Activated naive CD4-positive, alpha-beta T cell treated with anti-CD3 and anti-CD28 coated beads, Interleukin-2, amount 10 ng/mL, durations not matched to agents 7 days and 5 days (primary cell): ENCODE measurements at regions of chr5 and their contacts with region 1.

Region 1: DNA sequence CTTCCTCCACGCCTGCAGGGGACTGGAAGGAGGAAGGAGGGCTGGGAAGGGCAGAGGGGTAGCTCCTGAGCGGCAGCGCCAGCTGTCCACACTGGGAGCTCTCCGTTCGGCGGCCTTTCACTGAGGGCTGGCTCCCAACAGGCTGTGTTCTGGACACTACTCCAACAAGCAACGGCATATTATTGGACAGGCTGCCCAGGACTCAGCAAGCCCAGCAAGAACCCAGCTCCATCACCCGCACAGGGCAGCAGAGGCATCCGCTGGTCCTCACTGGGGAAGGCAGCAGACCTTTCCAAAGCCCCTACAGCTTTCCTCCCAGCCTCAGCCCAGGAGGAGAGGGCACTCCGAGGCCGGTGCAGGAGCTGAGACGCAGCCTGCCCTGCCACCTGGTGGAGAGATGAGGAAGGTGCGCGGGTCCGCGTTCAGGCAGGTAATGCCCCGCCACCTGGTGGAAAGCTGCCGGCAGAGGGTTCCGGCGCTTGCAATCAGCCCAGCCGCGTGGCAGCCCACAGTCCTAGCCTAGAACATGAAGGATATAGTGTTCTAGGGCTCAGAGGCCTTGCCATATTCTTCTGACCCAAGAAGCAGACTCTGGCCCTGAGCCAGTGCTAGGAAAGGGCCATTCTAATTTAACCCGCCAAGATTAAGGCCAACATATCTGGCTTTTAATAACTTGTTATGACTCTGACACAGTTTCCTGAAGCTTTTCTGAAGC is 74.4 kb downstream of the NRG2 start:
- DNase-seq: peak; percentile 91
- H3K4me3 Mint-ChIP-seq: no peak overlapping the region
- H3K27ac Mint-ChIP-seq: no peak overlapping the region
- H3K4me1 Mint-ChIP-seq: no peaks in the 10 kb centered on the region
- H3K27me3 Mint-ChIP-seq: peaks cover 51% of the 10 kb centered on the region

Region 2: DNA sequence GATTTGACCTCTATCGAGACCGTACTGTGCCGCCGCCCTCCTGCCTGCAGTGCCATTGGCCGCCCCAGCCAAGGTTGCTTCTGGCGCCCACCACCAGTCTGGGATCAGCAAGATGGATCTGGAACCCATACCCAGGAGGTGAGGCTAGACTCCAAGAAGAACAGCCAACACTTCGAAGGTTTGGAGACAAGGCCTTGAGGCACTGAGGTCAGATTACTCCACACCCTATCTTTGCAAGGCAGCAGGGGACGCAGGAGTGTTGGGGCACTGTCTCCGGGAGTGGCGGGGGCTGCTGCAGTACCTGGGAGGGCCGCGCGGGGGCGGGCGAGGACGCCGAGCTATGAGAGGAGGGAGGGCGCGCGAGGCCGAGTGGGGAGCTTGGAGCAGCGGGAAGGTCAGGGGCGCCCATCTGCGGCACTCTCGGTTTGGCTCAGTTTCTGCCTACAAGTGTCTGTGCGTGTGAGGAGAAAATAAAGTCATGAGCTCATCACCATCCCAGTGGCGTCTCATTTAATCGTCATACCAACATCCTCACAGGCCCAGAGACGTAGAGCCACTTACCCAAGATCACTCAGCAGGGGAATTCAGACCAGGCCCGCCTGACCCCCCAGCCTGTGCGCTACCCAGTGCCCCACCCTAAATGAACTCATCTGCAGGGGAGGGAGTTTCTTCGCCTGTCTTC is 193.6 kb before region 1 on chr5:
- CTCF ChIA-PET with region 1: interaction called, 33 read pairs
- DNase-seq: peak; percentile 83
- H3K4me3 Mint-ChIP-seq: no peak overlapping the region
- H3K27ac Mint-ChIP-seq: no peak overlapping the region
- H3K4me1 Mint-ChIP-seq: peaks cover 7% of the 10 kb centered on the region
- H3K27me3 Mint-ChIP-seq: peaks cover 56% of the 10 kb centered on the region

Region 3: GRCh38 chr5:139787568-139788293 is 181.0 kb before region 1 on chr5:
- CTCF ChIA-PET with region 1: interaction called, 119 read pairs
- DNase-seq: peak; percentile 86
- H3K4me3 Mint-ChIP-seq: peak overlapping the region; percentile 70
- H3K27ac Mint-ChIP-seq: no peak overlapping the region
- H3K4me1 Mint-ChIP-seq: peaks cover 13% of the 10 kb centered on the region
- H3K27me3 Mint-ChIP-seq: peaks cover 91% of the 10 kb centered on the region

Region 4: DNA sequence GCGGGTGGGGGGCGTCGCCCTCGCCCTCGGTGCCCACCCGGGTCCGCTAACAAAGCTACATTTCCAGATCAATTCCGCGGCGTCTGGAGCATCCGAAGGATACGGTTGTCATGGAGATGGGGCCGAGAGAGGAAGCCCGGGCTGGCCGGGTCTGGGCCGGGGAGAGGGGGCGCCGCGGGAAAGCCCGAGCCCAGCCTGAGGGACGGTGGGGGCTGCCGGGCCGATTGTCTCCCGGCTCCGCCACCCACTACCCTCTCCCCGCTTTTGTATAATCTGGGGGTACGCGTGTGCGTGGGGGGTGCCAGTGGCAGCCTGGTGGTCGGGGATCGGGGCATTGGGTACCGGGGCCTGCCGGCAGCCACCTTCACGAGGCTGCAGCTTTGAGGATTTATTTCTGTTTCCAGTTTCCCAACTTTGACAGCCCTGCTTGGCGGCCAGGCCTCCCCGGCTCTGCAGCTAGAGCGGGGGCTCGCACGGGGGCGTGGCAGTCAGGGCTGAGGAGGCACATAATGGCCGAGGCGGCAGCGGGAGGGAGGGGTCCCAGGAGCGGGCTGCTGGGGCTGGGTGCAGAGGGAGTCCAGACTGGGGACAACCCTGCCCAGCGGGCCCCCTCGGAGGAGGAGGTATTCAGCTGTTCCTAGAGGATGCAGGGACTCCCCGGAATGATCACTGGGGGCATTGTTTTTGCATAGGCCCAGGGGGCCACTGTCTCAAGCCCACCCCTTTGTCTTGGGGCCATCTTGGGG is 172.5 kb before region 1 on chr5:
- CTCF ChIA-PET with region 1: interaction called, 26 read pairs
- DNase-seq: no peak
- H3K4me3 Mint-ChIP-seq: no peak overlapping the region
- H3K27ac Mint-ChIP-seq: no peak overlapping the region
- H3K4me1 Mint-ChIP-seq: no peaks in the 10 kb centered on the region
- H3K27me3 Mint-ChIP-seq: peaks cover 96% of the 10 kb centered on the region

Region 5: DNA sequence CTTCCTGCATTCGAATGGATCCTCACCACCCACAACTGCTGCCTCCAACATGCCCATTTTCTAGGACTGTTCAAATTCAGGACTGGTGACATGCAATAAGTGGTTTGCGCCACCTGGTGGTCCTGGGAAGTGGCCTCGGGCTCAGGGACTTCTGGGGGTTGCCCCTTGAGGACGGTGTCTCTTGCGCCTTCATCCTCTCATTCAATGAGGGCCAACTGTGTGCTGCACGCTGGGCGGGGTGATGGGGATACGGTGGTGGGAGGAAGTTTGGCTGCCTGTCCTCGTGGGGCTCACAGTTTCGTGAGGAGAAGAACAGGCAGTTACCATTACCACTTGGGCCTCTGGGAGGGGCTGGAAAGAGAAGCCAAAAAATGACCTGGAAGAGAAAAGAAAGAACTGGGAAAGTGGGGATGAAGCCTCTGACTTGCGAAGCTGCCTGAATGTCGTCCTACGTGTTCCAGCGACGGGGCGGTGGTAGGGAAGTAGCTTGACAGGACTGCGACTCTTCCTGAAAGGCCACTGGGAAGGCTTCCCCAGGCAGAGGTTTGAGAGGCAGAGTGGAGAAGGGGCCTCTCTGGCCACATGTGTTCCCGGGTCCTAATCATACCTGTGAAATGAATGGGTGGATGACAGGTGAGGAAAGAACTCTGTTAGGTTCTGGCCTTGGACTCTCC is 124.1 kb before region 1 on chr5:
- CTCF ChIA-PET with region 1: interaction called, 13 read pairs
- DNase-seq: peak; percentile 80
- H3K4me3 Mint-ChIP-seq: no peak overlapping the region
- H3K27ac Mint-ChIP-seq: no peak overlapping the region
- H3K4me1 Mint-ChIP-seq: peaks cover 6% of the 10 kb centered on the region
- H3K27me3 Mint-ChIP-seq: peaks cover 64% of the 10 kb centered on the region

Region 6: GRCh38 chr5:139949710-139950109 is 19.0 kb before region 1 on chr5:
- CTCF ChIA-PET with region 1: interaction called, 10 read pairs
- DNase-seq: no peak
- H3K4me3 Mint-ChIP-seq: no peak overlapping the region
- H3K27ac Mint-ChIP-seq: no peak overlapping the region
- H3K4me1 Mint-ChIP-seq: no peaks in the 10 kb centered on the region
- H3K27me3 Mint-ChIP-seq: peaks cover 31% of the 10 kb centered on the region

Region 7: DNA sequence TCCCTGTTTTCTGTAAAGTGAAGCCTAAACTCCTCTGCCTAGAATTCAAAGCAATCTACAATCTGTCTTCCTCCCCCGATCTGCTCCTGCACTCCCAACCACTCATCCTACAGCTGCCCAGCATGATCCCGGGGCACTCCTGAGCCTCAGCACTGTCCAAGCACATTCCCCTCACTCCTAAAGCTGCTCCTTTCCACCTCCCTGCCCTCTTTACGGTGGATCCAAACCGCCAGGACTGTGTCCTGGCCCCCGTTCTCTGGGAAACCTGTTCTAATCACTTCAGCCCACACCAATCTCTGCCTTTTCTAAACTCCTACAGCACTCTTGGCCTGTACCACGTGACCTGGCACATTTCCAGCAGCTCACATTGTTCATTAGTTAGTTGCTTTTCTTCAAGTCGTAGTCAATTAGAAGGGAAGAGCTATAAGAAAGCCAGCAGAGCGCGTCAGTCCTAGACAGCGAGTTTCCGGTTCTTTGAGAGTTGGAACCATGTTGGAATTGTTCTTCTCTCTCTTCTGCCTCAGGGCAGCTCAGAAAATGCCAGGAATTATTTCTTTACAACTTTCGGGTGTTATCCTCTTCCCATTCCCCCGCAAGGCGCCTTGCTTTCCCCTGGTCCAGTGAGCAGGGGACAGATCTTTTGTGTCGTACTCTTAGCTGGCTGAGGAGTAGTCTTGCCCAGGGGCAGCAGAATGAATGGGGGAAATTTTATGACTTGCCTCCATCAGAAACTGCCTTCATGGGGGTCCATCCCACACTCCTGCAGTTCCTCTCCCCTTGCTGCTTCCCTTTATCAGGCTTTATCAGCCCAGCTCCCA is 13.7 kb after region 1 on chr5:
- CTCF ChIA-PET with region 1: interaction called, 29 read pairs
- DNase-seq: no peak
- H3K4me3 Mint-ChIP-seq: no peak overlapping the region
- H3K27ac Mint-ChIP-seq: no peak overlapping the region
- H3K4me1 Mint-ChIP-seq: no peaks in the 10 kb centered on the region
- H3K27me3 Mint-ChIP-seq: peaks cover 47% of the 10 kb centered on the region